Ovary (tissue), 10 donors: ENCODE measurements at regions of chr17 and their contacts with region 1.

Region 1: DNA sequence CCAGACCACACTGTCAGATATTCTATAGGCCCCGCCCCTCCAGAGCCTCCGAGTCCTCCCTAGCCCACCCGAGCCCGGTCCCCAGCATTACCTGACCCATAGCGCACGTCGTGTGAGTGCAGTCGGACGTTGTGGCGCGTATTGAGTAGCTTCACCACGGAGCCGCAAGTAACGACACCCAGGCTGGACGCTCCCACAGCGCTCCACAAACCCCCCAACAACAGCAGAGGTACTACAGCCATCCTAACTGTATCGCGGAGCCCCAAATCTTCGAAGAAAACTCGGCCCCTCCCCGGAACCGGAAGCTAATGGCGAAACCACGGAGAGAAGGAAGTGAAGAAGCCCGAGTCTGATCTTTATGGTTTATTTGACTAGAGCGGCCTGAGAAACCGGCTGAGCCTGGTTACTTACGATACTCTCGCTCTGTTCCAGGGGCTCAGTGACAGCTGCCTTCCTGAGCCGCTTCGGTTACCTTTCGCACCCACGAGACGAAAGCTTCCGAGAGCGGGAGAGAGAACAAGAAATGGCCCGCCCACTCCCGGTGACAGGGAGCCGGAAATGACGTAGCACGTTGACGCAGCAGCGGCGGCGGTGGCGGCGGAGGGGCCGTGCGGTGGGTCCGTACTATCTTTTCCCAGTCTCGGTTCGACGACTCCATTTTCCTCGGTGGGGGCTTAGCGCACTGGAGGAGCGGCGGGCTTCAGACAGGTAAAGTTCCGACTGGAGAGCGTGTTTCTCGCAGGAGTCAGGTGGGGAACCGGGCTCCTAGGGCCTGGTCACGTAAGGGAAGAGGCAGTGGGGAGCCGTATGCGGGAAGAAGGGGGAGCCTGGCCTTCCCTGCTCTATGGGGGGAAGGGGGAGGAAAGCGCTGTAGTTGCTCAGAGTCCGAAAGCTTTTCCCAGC is at the starts of genes SDF2 and SUPT6H:
- DNase-seq: peak; percentile 87 to 94 (median 92)
- H3K4me3 ChIP-seq: peak within 1 kb of the TSS; percentile 83
- H3K27ac ChIP-seq: peak within 1 kb of the TSS; percentile 82 to 96
- H3K4me1 ChIP-seq: peaks cover 6% of the 10 kb centered on the region
- H3K27me3 ChIP-seq: no peaks in the 10 kb centered on the region
- CTCF ChIP-seq: no peak
- EP300 ChIP-seq: no peak
- POLR2A ChIP-seq: peak; percentile 92
- total RNA-seq, gene SDF2: 33.9 to 53.1 (median 46.7) TPM
- total RNA-seq, gene SUPT6H: 42.3 to 83.8 (median 67.2) TPM

Region 2: GRCh38 chr17:28675980-28676379 is 14.1 kb after region 1 on chr17:
- intact Hi-C with region 1: loop called in 1 of 4 experiments (anchors 2 kb)
- DNase-seq: no peak
- H3K4me3 ChIP-seq: no peak overlapping the region
- H3K27ac ChIP-seq: no peak overlapping the region
- H3K4me1 ChIP-seq: no peaks in the 10 kb centered on the region
- H3K27me3 ChIP-seq: no peaks in the 10 kb centered on the region
- CTCF ChIP-seq: no peak
- EP300 ChIP-seq: no peak
- POLR2A ChIP-seq: no peak

Region 3: GRCh38 chr17:28701987-28702751 is 40.3 kb after region 1 on chr17:
- intact Hi-C with region 1: loop called in 1 of 4 experiments (anchors 10 kb)
- DNase-seq: no peak
- H3K4me3 ChIP-seq: no peak overlapping the region
- H3K27ac ChIP-seq: no peak overlapping the region
- H3K4me1 ChIP-seq: no peaks in the 10 kb centered on the region
- H3K27me3 ChIP-seq: no peaks in the 10 kb centered on the region
- CTCF ChIP-seq: no peak
- EP300 ChIP-seq: no peak
- POLR2A ChIP-seq: no peak

Region 4: GRCh38 chr17:28717578-28718333 is 55.9 kb after region 1 on chr17 and contains the start of gene RAB34:
- intact Hi-C with region 1: loop called in 1 of 4 experiments (anchors 5 kb)
- DNase-seq: peak; percentile 86 to 92 (median 90)
- H3K4me3 ChIP-seq: peak within 1 kb of the TSS; percentile 72
- H3K27ac ChIP-seq: peak within 1 kb of the TSS; percentile 91 to 97
- H3K4me1 ChIP-seq: peaks cover 15% of the 10 kb centered on the region
- H3K27me3 ChIP-seq: no peaks in the 10 kb centered on the region
- CTCF ChIP-seq: peak in 1 of 3 donors; percentile 15
- EP300 ChIP-seq: no peak
- POLR2A ChIP-seq: peak; percentile 85
- total RNA-seq, gene RAB34: 149 to 222 (median 169) TPM